Upper lobe of right lung (tissue), 1 donor: ENCODE measurements at regions of chr7 and their contacts with region 1.

Region 1: DNA sequence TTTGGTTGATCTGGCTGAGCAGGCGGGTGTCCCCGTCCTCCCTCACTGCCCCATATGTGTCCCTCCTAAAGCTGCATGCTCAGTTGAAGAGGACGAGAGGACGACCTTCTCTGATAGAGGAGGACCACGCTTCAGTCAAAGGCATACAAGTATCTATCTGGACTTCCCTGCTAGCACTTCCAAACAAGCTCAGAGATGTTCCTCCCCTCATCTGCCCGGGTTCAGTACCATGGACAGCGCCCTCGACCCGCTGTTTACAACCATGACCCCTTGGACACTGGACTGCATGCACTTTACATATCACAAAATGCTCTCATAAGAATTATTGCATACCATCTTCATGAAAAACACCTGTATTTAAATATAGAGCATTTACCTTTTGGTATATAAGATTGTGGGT is 26.9 kb upstream of the TRIM56 start:
- DNase-seq: peak; percentile 77
- ATAC-seq: peak; percentile 64
- H3K4me3 ChIP-seq: no peak overlapping the region
- H3K27ac ChIP-seq: no peak overlapping the region
- H3K4me1 ChIP-seq: no peaks in the 10 kb centered on the region
- H3K27me3 ChIP-seq: peaks cover 52% of the 10 kb centered on the region
- CTCF ChIP-seq: no peak

Region 2: DNA sequence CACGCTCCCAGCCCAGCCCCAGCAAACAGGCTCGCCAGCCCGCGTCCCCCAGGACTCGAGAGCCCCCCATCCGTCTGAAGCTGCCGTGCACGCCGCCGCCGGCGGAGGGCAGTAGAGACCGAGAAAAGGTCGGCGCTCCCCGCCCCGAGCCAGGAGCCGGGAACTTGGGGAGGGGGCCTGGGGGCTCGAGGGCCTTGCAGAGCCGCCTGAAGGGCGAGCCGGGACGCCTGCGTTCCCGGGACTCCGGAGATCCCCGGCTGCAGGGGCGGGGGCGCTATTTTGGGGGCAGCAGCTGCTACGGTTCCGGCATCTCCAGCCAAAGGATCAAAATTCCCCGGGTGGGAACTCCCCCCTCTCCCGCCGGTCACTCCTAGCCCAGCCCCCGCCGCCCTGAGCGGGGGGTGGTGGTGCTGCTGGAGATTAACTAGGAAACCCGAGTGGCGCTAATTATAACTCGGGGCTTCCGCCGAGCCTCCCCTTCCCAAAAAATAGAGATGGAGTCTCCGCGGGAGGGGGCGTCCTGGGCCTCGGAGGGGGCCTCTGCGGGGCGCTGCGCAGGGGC is 163.4 kb before region 1 on chr7:
- intact Hi-C with region 1: loop called (anchors 5 kb)
- DNase-seq: peak; percentile 80
- ATAC-seq: peak; percentile 17
- H3K4me3 ChIP-seq: peak overlapping the region; percentile 45
- H3K27ac ChIP-seq: no peak overlapping the region
- H3K4me1 ChIP-seq: peaks cover 29% of the 10 kb centered on the region
- H3K27me3 ChIP-seq: peaks cover 28% of the 10 kb centered on the region
- CTCF ChIP-seq: peak; percentile 76

Region 3: GRCh38 chr7:101550641-101551541 is 492.5 kb after region 1 on chr7:
- intact Hi-C with region 1: no loop called
- DNase-seq: peak; percentile 70
- ATAC-seq: peak; percentile 59
- H3K4me3 ChIP-seq: no peak overlapping the region
- H3K27ac ChIP-seq: no peak overlapping the region
- H3K4me1 ChIP-seq: no peaks in the 10 kb centered on the region
- H3K27me3 ChIP-seq: no peaks in the 10 kb centered on the region
- CTCF ChIP-seq: no peak